ENCODE measurements at regions of chr5 and their contacts with region 1.

Region 1: DNA sequence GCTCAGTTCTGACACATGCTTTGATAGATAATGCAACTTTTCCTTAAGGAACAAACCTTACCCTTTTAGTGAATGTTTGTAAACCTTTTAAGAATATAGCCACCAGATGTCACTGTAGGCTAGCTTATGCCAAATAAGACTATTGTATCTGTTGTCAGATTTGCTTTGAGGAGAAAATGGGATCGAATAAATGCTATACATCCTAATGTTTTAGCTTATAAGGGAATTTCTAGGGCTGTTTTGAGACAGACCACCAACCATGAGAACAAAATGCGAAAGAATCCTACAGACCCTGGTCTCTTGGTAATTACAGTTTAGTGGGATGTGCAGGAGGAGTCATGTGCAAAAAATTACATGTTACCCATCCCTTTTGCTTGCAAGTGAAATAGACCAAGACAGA is 127.6 kb upstream of the NMUR2 start:
- DNase-seq: peak; percentile 28 to 66
- ATAC-seq: peak; percentile 81 to 85
- H3K4me3 ChIP-seq: no peak overlapping the region
- H3K27ac ChIP-seq: no peak overlapping the region
- H3K4me1 ChIP-seq: no peaks in the 10 kb centered on the region
- CTCF ChIP-seq: peak; percentile 67
- EP300 ChIP-seq: no peak
- POLR2A ChIP-seq: no peak
- RAD21 ChIP-seq: peak; percentile 82 to 86

Region 2: DNA sequence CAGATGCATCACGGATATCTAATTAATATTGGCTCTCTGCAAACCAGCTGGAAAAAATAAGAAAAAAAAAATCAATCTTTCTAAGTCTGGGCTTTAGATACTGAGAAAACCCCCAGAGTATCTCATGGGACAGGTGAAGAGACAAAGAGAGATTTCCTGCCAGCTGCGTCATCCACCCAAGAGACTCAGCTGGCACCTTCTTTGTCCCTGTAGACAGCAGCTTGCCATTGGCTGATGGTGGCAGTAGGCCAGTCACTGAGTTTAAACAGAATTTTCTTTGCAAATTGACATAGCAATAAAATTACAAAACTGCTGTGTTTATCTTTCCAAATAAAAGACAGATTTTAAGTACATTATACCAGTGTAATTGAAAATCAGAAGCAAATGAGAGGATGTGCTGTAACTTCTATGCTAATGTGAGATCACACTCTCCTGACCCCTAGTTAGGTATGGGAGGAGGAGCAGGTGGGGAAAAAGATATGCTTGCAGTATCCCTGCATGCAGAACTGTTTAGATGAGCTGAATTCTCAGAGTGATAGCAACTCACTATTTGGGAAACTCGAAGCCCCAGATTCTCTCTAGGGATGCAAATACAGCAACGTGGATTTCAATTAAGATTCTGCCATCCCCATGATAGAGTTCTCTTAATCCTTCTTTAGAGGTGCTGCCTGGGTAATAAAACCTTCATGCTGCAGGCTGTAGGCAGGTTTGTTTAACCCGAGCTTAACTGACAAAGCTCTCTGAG is 199.8 kb before region 1 on chr5:
- CTCF ChIA-PET with region 1: no interaction called
- POLR2A ChIA-PET with region 1: no interaction called
- DNase-seq: no peak
- ATAC-seq: no peak
- H3K4me3 ChIP-seq: no peak overlapping the region
- H3K27ac ChIP-seq: no peak overlapping the region
- H3K4me1 ChIP-seq: no peaks in the 10 kb centered on the region
- CTCF ChIP-seq: no peak
- EP300 ChIP-seq: no peak
- POLR2A ChIP-seq: no peak
- RAD21 ChIP-seq: no peak

Region 3: DNA sequence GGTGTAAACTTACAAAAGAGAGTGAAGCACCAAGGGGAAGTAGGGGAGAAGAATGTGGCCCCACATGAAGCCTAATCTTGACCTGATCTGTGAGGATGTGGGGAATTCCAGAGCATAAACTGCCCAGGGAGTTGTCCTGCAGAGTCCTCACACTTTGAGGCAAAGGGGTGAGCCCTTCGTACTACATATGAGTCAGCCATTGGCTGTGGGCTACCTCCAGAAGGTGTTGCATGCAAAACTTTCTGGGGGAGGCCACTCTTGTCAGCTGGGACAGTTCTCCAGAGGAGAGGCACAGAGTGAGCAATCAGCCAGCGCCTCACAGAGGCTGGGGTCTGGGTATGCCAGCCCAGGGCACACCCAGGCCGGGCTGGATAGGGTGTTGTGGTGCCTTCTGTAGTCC is 29.5 kb before region 1 on chr5:
- CTCF ChIA-PET with region 1: no interaction called
- POLR2A ChIA-PET with region 1: no interaction called
- DNase-seq: no peak
- ATAC-seq: no peak
- H3K4me3 ChIP-seq: no peak overlapping the region
- H3K27ac ChIP-seq: no peak overlapping the region
- H3K4me1 ChIP-seq: no peaks in the 10 kb centered on the region
- CTCF ChIP-seq: no peak
- EP300 ChIP-seq: no peak
- POLR2A ChIP-seq: no peak
- RAD21 ChIP-seq: no peak

Region 4: GRCh38 chr5:152514827-152515397 is 17.8 kb before region 1 on chr5:
- CTCF ChIA-PET with region 1: interaction called, 15 read pairs
- POLR2A ChIA-PET with region 1: no interaction called
- DNase-seq: peak; percentile 10 to 31
- ATAC-seq: peak; percentile 54 to 69; a peak in 4 of 6 replicates
- H3K4me3 ChIP-seq: no peak overlapping the region
- H3K27ac ChIP-seq: no peak overlapping the region
- H3K4me1 ChIP-seq: no peaks in the 10 kb centered on the region
- CTCF ChIP-seq: peak; percentile 54
- EP300 ChIP-seq: no peak
- POLR2A ChIP-seq: no peak
- RAD21 ChIP-seq: peak; percentile 30 to 31; a peak in 3 of 5 replicates

Region 5: GRCh38 chr5:153959134-153959957 is 1426.6 kb after region 1 on chr5:
- CTCF ChIA-PET with region 1: interaction called, 102 read pairs
- POLR2A ChIA-PET with region 1: no interaction called
- DNase-seq: peak in 1 of 2 experiments; percentile 22
- ATAC-seq: peak; percentile 53 to 75
- H3K4me3 ChIP-seq: no peak overlapping the region
- H3K27ac ChIP-seq: no peak overlapping the region
- H3K4me1 ChIP-seq: no peaks in the 10 kb centered on the region
- CTCF ChIP-seq: no peak
- EP300 ChIP-seq: no peak
- POLR2A ChIP-seq: no peak
- RAD21 ChIP-seq: no peak

Measured in A549 (cell line).